ENCODE measurements at regions of chr16 and their contacts with region 1.

Region 1: DNA sequence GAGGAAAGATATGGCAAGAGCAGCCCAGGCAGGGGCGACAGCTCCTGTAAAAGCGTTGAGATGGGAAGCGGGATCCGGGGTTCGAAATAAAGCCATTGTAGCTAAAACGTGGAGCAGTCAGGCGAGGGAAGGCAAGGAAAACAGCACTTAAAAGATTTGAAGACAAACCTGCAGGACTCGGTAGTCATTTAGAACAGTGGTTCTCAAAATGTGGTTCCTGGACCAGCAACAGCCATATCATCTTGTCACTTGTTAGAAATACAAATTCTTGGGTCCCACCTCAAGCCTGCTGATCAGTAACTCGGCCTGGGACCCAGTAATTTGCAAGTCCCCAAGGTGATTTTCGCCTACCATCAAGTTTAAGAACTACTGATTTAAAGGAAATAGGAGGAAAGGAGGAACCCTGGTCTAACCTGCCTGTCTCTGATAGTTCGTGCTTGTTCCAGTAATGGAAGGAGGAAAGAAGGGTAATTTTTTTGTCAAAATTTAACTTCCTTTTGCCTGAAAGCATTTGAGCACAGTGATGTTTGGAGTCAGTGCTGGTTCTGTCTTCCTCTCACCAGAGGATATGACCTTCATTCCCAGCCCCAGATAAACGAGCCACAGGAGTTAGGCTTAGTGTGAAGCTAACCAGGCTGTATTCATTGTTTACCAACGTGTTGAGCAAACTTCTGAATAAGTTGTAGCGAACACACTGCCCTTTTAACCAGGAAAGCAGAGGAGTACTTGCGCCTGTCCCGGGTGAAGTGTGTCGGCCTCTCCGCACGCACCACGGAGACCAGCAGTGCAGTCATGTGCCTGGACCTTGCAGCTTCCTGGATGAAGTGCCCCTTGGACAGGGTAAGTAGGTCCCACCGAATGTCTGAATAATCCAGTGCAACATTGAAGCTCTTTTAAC is 1.1 kb downstream of the ORC6 start:
- DNase-seq: no peak
- H3K4me3 Mint-ChIP-seq: no peak overlapping the region
- H3K27ac Mint-ChIP-seq: no peak overlapping the region
- H3K4me1 Mint-ChIP-seq: peaks cover 27% of the 10 kb centered on the region
- H3K27me3 Mint-ChIP-seq: no peaks in the 10 kb centered on the region

Region 2: GRCh38 chr16:46629331-46630219 is 61.0 kb before region 1 on chr16:
- CTCF ChIA-PET with region 1: no interaction called
- POLR2A ChIA-PET with region 1: no interaction called
- DNase-seq: no peak
- H3K4me3 Mint-ChIP-seq: no peak overlapping the region
- H3K27ac Mint-ChIP-seq: no peak overlapping the region
- H3K4me1 Mint-ChIP-seq: no peaks in the 10 kb centered on the region
- H3K27me3 Mint-ChIP-seq: no peaks in the 10 kb centered on the region

Region 3: DNA sequence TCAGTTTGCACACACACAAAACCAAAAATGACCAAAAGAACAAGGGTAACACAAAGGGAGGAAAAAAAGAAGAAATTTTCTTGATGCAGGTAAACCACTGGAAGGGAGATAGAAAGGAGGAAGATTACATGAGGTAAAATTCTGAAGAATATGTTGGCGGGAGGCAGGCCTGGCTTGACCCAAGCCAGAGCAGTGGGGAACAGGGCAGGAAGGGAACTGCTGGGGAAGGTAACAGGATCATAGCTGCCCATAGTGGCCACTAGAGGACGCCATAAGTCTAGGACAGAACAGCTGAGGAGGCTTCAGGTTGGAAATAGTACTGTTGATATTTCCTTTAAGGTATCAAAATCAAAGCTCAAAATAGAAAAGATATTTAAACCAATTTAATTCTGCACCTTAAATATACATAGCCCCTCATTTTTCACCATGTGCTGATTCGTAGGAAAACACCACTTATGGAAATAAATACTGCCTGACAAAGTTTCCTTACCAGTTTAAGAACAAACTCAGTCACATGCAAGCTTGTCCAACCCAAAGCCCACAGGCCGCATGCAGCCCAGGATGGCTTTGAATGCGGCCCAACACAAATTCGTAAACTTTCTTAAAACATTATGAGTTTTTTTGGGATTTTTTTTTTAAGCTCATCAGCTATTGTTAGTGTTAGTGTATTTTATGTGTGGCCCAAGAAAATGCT is 17.1 kb before region 1 on chr16:
- CTCF ChIA-PET with region 1: interaction called, 14 read pairs
- POLR2A ChIA-PET with region 1: no interaction called
- DNase-seq: peak; percentile 56
- H3K4me3 Mint-ChIP-seq: no peak overlapping the region
- H3K27ac Mint-ChIP-seq: no peak overlapping the region
- H3K4me1 Mint-ChIP-seq: no peaks in the 10 kb centered on the region
- H3K27me3 Mint-ChIP-seq: no peaks in the 10 kb centered on the region

Measured in activated CD4-positive, alpha-beta T cell treated with anti-CD3 and anti-CD28 coated beads, Interleukin-2, amount 10 ng/mL, durations not matched to agents 7 days and 5 days (primary cell).